ENCODE measurements at regions of chr9 and their contacts with region 1.

Region 1: GRCh38 chr9:68933434-68934328 is 80.2 kb downstream of the PRKACG start:
- DNase-seq: no peak
- ATAC-seq: no peak
- H3K4me3 ChIP-seq: no peak overlapping the region
- H3K27ac ChIP-seq: no peak overlapping the region
- H3K4me1 ChIP-seq: no peaks in the 10 kb centered on the region
- H3K27me3 ChIP-seq: no peaks in the 10 kb centered on the region
- CTCF ChIP-seq: no peak

Region 2: GRCh38 chr9:68637020-68637419 is 296.7 kb before region 1 on chr9:
- intact Hi-C with region 1: loop called in 1 of 2 experiments (anchors 10 kb)
- DNase-seq: no peak
- ATAC-seq: no peak
- H3K4me3 ChIP-seq: no peak overlapping the region
- H3K27ac ChIP-seq: no peak overlapping the region
- H3K4me1 ChIP-seq: no peaks in the 10 kb centered on the region
- H3K27me3 ChIP-seq: peaks cover 0 to 5% (median 0%) of the 10 kb centered on the region in 3 donors
- CTCF ChIP-seq: no peak

Region 3: DNA sequence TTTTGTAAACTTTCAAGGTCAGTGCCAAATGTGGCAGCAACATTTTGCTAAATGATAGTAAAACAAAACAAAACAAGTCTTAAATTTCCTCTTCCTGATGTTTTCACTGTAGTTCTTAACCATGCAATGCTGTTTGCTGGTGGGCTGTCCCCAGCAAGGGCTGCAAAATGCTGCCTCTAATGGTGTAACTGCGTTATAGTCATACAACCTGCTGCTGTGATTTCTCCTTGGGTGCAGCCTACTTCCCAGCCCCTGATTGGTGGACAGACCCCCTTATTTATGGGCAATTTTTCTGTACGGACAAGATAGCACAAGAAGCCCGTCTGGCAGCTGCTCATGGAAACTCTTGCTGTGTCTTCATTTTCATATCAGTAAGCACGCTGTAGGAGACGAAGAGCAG is 255.3 kb before region 1 on chr9:
- intact Hi-C with region 1: loop called in 1 of 2 experiments (anchors 10 kb)
- DNase-seq: no peak
- ATAC-seq: peak in 2 of 4 donors; percentile 50 to 73
- H3K4me3 ChIP-seq: no peak overlapping the region
- H3K27ac ChIP-seq: no peak overlapping the region
- H3K4me1 ChIP-seq: no peaks in the 10 kb centered on the region
- H3K27me3 ChIP-seq: peaks cover 0 to 38% (median 0%) of the 10 kb centered on the region in 3 donors
- CTCF ChIP-seq: peak; percentile 5

Region 4: DNA sequence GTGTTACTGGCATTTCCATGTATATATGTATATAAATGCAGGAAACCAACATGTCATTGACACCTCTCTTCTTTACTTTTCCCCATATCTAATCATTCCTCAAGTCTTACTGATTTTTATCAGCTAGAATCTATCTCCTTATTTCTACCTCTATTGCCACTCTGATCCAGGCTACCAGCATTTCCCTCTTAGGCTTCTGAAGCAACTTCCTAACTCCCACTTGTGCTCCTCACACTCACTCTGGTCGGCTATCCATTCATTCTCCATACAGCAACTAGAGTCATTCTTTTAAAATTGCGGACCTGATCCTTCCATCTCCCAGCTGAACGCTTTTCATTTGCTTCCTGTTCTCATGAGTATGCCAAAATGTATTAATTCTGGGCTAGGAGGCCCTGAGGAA is 150.1 kb before region 1 on chr9:
- intact Hi-C with region 1: no loop called
- DNase-seq: no peak
- ATAC-seq: no peak
- H3K4me3 ChIP-seq: peak overlapping the region; percentile 77
- H3K27ac ChIP-seq: no peak overlapping the region
- H3K4me1 ChIP-seq: peaks cover 48% of the 10 kb centered on the region
- H3K27me3 ChIP-seq: no peaks in the 10 kb centered on the region
- CTCF ChIP-seq: no peak

Region 5: DNA sequence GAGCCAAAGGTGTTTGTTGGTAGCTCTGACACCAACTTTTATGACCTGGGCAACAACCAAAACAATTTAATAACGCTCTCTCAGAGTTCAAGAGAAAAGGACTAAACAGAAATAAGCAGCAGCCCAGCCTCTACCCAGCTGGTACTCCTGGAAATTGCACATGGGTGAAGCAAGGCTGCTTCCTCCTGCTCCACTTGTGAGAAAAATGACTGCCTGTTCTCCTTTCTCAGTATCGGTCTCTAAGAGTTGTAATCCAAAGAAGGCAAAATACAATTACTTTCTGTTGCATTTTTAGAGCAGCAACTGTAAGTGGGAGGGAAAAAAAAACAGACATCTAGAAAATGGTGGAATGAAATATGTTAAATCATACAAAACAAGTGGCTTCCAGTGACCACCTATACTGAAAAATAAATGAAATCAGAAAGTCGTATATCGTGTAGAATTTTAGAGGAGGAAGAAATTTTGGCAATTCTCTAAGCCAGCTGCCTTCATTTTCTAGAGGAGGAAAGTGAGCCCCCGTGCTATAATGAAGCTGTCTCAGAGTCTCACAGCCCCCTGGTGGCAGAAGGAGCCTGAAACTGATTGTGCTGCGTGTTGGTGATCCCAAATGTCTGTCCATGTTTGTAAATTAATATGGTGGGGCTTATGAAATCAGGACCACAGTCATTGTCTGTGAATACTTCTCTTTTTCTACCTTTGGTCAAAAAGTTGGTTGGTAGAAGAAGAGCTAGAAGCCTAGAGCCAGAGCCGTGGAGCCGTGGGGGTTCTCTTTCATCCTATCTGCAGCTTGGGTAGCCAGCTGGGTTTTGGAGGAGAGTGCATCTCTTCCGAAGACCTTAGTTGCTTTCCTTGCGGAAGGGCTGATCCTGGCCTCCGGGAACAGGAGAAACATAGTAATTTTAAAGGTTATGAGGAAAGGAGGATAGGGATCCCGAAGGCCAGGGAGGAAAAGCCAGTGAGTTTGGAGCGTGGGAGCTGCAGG is 88.8 kb before region 1 on chr9:
- intact Hi-C with region 1: no loop called
- DNase-seq: peak in 1 of 2 donors; percentile 22
- ATAC-seq: peak in 3 of 4 donors; percentile 63 to 81 (median 68)
- H3K4me3 ChIP-seq: no peak overlapping the region
- H3K27ac ChIP-seq: no peak overlapping the region
- H3K4me1 ChIP-seq: peaks cover 7% of the 10 kb centered on the region
- H3K27me3 ChIP-seq: no peaks in the 10 kb centered on the region
- CTCF ChIP-seq: peak; percentile 53

Region 6: DNA sequence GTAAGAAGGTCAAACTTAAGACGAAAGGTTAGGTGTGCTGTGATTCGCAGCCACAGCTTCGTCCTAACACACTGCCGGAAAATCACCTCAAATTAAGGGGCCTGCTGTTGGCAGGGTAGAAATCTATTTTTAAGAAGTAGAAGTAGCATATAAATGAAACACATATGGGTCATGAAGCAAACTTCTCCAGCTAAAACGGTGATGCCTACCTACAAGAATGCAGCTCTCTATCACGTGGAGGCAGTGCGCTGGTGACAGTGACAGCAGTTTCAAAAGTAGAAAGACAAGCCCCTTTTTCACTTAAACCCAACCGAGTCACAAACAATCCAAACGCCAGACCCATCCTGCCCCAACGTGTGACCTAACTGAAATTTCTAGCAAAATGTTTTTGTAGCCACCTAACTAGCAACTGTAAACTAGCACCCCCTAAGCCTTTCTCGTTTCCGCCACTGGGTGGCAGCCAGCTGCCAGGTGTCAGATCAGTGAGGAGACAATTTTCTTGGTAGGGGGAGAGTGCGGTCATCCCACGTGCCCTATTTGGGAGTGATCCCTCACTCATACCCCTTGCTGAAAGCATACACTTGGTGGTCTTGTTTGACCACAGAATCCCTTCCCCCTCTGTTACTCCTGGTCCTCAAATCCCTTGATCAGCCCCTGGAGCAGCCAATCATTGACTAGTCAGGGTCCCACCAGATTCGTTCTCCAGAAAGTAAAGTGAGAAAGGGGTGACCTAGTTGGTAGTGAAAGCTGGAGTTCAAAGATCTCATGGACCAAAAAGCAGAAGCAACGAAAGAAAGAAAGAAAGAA is 1038.2 kb after region 1 on chr9:
- intact Hi-C with region 1: no loop called
- DNase-seq: peak; percentile 71 to 86
- ATAC-seq: peak; percentile 74 to 92 (median 78)
- H3K4me3 ChIP-seq: no peak overlapping the region
- H3K27ac ChIP-seq: no peak overlapping the region
- H3K4me1 ChIP-seq: no peaks in the 10 kb centered on the region
- H3K27me3 ChIP-seq: no peaks in the 10 kb centered on the region
- CTCF ChIP-seq: peak; percentile 89